ENCODE measurements at regions of chr17 and their contacts with region 1.

Region 1: DNA sequence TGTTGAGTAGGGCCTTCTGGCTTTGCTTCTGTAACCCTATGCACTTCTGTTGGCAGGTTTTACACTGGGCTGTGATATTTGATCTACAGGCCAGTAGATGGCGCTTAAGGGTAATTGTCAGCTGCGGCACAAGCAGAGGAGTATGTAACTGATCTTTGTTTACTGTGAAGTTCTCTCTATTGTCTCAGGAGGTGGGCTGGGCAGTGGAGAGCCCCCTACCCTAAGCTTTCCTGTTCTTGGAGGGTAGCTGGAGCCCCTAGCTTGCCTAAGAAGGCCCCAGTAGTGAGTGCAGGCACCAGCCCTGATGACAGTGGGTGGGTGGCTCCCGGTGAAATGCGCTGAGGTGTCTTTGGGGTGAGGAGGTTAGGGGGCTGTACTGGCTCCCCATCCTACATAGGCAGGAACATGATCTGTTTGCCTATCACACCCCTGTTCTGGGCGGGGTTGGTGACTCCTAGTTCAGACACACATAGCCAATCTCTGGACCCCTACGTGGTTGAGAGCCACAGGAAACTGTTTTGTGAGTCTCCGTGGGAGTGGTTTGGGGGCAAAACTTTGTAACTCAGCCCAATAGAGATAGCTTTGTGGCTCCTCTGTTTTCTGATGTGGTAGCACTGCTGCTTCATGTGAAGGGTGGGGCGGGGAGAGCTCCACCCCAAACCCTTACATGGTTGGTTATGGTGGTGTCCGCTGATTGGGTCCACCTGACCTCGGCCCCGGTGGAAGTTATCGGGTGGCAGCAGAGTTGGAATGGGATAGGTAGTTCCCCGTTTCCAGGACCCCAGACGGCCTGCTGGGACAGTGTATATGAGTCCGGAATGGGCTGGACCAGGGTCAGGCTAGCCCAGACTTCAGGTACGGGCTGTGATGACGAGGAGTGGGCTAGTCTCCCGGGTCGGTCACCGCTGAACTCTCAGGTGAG is 60.4 kb downstream of the SLFN11 start:
- DNase-seq: peak; percentile 78
- H3K4me3 Mint-ChIP-seq: peak overlapping the region; percentile 81
- H3K27ac Mint-ChIP-seq: peak overlapping the region; percentile 88
- H3K4me1 Mint-ChIP-seq: peaks cover 45% of the 10 kb centered on the region
- H3K27me3 Mint-ChIP-seq: peaks cover 2% of the 10 kb centered on the region

Region 2: DNA sequence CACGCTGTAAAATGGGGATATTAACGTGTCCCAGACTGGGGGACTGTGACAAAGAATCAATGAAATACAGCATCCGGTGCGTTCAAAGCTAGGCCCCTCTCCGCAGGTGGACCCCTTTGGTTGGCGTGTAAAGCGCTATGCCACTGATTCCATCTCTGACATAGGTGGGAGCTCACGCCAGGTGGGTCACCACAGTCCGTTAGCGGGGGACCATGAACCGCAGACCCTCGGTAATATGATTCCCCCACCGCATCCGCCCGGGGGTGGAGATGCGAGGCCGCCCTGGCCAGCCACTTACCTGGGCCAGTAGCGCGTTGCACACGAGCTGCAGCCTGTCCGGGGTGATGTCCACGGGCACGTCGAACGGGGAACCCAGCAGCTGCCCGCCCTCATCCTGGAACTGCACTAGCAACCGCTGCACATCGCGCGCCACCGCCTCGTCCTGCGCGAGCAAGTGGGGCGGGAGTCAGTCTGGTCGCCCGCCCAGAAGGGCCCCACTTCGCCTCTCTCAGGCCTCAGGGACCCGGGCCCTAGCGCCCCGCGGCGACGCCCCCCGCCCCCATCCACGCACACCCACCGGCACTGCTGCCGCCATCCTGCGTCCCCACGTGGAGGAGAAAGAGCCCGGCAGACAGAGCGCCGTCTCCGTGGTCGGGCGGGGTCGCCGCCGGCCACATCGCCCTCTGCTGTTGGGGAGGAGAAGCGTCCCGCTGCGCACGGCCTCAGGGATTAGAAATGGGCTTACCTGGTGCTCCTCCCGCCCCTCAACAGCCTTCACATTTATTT is 171.2 kb before region 1 on chr17 and contains the start of gene NLE1:
- intact Hi-C with region 1: loop called (anchors 2 kb)
- DNase-seq: peak; percentile 85
- H3K4me3 Mint-ChIP-seq: peak within 1 kb of the TSS; percentile 86
- H3K27ac Mint-ChIP-seq: peak within 1 kb of the TSS; percentile 80
- H3K4me1 Mint-ChIP-seq: no peaks in the 10 kb centered on the region
- H3K27me3 Mint-ChIP-seq: no peaks in the 10 kb centered on the region
- total RNA-seq, gene NLE1: 51.1 and 54.4 TPM in 2 replicates

Region 3: GRCh38 chr17:35210741-35211140 is 102.3 kb before region 1 on chr17:
- intact Hi-C with region 1: no loop called
- DNase-seq: no peak
- H3K4me3 Mint-ChIP-seq: no peak overlapping the region
- H3K27ac Mint-ChIP-seq: no peak overlapping the region
- H3K4me1 Mint-ChIP-seq: peaks cover 51% of the 10 kb centered on the region
- H3K27me3 Mint-ChIP-seq: peaks cover 3% of the 10 kb centered on the region

Region 4: GRCh38 chr17:35345926-35346771 is 33.1 kb after region 1 on chr17:
- intact Hi-C with region 1: loop called (anchors 1 kb)
- DNase-seq: peak; percentile 26
- H3K4me3 Mint-ChIP-seq: peak overlapping the region; percentile 91
- H3K27ac Mint-ChIP-seq: peak overlapping the region; percentile 40
- H3K4me1 Mint-ChIP-seq: peaks cover 61% of the 10 kb centered on the region
- H3K27me3 Mint-ChIP-seq: peaks cover 9% of the 10 kb centered on the region

Region 5: DNA sequence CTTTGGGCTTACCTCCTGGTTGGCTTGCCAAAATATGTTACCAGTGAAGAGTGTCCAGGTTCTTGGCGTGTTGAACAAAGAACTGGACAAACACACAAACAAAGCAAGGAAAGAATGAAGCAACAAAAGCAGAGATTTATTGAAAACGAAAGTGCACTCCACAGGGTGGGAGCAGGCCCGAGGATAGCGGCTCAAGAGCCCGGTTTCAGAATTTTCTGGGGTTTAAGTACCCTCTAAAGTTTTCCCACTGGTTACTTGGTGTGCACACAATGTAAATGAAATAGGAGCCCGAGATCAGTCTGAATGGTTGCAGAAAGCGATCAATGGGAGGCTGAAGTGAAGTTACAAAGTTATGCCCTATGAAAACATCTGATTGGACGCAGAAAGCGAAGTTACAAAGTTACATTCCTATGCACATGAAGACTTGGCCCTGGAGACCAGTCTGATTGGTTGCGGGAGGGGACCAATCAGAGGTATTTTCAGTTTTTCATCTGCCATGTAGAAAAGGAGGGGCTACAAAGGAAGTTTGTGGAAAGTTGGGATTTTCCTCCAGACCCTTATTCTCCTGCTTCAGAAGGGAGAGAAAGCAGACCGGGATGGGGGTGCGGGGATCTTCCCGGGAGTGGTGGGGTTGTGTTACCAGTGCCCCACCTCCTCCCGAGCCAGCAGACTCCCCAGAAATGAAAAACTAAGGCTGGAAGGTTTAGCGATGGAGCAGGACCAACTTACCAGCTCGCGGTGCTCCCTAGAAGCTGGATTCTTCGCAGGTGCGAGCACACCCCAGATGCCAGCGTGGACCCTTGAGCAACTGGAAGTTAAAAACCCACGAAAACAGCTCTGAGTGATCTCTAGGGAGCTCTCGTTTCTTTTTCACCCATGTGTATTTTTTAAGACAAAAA is 119.4 kb after region 1 on chr17 and contains the start of gene SLFN12:
- intact Hi-C with region 1: loop called (anchors 2 kb)
- DNase-seq: peak; percentile 36
- H3K4me3 Mint-ChIP-seq: peak within 1 kb of the TSS; percentile 86
- H3K27ac Mint-ChIP-seq: peak within 1 kb of the TSS; percentile 87
- H3K4me1 Mint-ChIP-seq: peaks cover 51% of the 10 kb centered on the region
- H3K27me3 Mint-ChIP-seq: no peaks in the 10 kb centered on the region
- total RNA-seq, gene SLFN12: 6.6 and 8.4 TPM in 2 replicates

Region 6: DNA sequence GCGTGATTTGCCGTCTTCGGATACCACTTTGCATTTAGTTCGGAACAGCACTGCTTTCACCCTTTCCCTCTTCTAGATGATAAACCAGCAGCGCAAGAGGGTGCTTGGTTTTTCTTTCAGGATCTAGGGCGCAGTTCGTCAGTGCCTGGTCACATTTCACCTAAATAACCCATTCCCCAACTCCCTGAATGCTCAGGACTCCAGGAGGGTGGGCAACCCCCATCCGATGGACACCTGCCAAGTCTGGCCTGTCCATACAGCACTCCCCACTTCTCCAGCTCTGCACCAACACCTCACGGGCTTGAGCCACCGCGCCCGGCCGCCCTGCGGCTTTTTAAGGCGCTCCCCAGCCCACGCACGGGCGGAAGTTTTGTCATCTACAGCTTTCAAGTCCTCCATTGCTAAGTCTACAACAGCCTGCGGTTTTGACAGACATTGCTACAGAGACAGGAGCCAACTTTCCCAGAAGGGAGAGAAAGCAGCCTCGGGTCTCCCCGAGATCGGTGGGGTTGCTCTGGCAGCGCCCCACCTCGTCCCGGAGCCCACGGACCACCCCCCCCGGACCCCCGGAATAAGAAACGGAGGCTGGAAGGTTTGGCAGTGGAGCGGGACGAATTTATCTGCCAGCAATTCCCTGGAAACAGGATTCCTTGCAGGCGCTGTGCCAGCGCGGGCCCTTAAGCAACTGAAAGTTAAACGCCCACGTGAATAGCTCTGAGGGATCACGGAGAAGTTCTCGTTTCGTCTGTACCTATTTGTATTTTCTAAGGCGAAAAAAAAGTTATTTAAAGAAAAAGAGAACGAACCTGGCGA is 174.1 kb after region 1 on chr17:
- intact Hi-C with region 1: loop called (anchors 1 kb)
- DNase-seq: peak; percentile 71
- H3K4me3 Mint-ChIP-seq: peak overlapping the region; percentile 92
- H3K27ac Mint-ChIP-seq: peak overlapping the region; percentile 93
- H3K4me1 Mint-ChIP-seq: peaks cover 78% of the 10 kb centered on the region
- H3K27me3 Mint-ChIP-seq: peaks cover 2% of the 10 kb centered on the region

Region 7: GRCh38 chr17:35747540-35748017 is 434.5 kb after region 1 on chr17:
- intact Hi-C with region 1: loop called (anchors 1 kb)
- DNase-seq: peak; percentile 64
- H3K4me3 Mint-ChIP-seq: no peak overlapping the region
- H3K27ac Mint-ChIP-seq: no peak overlapping the region
- H3K4me1 Mint-ChIP-seq: peaks cover 13% of the 10 kb centered on the region
- H3K27me3 Mint-ChIP-seq: peaks cover 37% of the 10 kb centered on the region